ENCODE measurements at regions of chr3 and their contacts with region 1.

Region 1: GRCh38 chr3:187016639-187017345 is 86.5 kb downstream of the ST6GAL1 start:
- H3K4me3 Mint-ChIP-seq: no peak overlapping the region
- H3K27ac Mint-ChIP-seq: peak overlapping the region; percentile 41
- H3K4me1 Mint-ChIP-seq: peaks cover 67% of the 10 kb centered on the region
- H3K27me3 Mint-ChIP-seq: no peaks in the 10 kb centered on the region

Region 2: GRCh38 chr3:186821429-186822367 is 195.1 kb before region 1 on chr3:
- intact Hi-C with region 1: no loop called
- H3K4me3 Mint-ChIP-seq: no peak overlapping the region
- H3K27ac Mint-ChIP-seq: no peak overlapping the region
- H3K4me1 Mint-ChIP-seq: peaks cover 50% of the 10 kb centered on the region
- H3K27me3 Mint-ChIP-seq: peaks cover 28% of the 10 kb centered on the region

Region 3: GRCh38 chr3:186953011-186953487 is 63.7 kb before region 1 on chr3:
- intact Hi-C with region 1: loop called (anchors 10 kb)
- H3K4me3 Mint-ChIP-seq: peak overlapping the region; percentile 18
- H3K27ac Mint-ChIP-seq: peak overlapping the region; percentile 70
- H3K4me1 Mint-ChIP-seq: peaks cover 89% of the 10 kb centered on the region
- H3K27me3 Mint-ChIP-seq: no peaks in the 10 kb centered on the region

Measured in dendritic cell treated with granulocyte-macrophage colony-stimulating factor and Interleukin-4, amounts not matched to agents 40 ng/mL and 50 ng/mL, for 4 days (primary cell).